Lower leg skin (tissue), 4 donors: ENCODE measurements at regions of chr10 and their contacts with region 1.

Region 1: DNA sequence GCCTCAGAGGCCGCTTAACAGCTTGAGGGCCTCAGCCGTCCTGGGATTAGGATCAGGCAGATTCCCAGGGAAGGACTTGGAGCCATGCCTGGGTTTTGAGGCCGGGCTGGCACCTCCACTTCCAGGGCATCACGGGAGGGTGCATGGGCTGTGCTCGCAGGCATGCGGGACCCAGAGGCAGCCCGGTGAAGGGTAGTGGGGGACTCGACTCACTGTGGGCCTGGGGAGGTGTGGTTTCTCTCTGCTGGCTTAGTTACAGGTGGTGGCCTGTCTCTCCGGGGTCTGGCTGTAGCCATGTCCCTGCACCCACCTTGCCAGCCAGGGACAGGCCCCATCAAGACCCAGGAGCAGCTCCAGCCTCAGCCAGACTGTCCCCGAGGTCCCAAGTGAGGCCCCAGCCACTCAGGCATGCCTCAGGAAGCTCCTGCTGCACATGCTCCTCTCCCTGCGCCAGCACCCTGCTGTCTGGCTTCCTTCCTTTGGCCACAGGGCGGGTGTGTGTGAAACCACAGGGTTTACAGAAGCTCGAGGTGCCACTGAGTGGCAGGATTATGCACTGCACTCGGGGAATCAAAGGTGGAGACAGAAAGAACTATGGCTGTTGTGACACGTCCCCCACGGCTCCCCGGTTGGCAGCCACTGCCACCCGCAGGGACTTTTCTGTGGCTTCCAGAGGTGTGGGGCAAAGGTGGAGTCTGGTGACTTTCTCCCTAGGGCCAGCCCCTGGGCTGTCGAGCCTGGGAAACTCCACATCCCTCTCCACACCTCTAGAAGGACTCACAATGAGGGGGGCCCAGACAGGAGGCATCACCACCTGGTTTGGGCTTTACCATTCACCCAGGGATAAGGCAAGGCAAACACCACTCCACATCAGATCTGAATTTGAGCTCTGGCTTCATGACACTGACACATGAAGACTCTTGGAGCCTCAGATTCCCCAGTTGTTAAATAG is 19.7 kb downstream of the GOLGA7B start:
- DNase-seq: peak; percentile 88 to 96
- H3K4me3 ChIP-seq: no peak overlapping the region
- CTCF ChIP-seq: peak in 1 of 3 donors; percentile 68
- POLR2A ChIP-seq: no peak

Region 2: GRCh38 chr10:97792141-97792721 is 77.1 kb before region 1 on chr10:
- intact Hi-C with region 1: loop called (anchors 5 kb)
- DNase-seq: peak; percentile 58 to 93
- H3K4me3 ChIP-seq: no peak overlapping the region
- CTCF ChIP-seq: no peak
- POLR2A ChIP-seq: no peak